ENCODE measurements at regions of chr16 and their contacts with region 1.

Region 1: DNA sequence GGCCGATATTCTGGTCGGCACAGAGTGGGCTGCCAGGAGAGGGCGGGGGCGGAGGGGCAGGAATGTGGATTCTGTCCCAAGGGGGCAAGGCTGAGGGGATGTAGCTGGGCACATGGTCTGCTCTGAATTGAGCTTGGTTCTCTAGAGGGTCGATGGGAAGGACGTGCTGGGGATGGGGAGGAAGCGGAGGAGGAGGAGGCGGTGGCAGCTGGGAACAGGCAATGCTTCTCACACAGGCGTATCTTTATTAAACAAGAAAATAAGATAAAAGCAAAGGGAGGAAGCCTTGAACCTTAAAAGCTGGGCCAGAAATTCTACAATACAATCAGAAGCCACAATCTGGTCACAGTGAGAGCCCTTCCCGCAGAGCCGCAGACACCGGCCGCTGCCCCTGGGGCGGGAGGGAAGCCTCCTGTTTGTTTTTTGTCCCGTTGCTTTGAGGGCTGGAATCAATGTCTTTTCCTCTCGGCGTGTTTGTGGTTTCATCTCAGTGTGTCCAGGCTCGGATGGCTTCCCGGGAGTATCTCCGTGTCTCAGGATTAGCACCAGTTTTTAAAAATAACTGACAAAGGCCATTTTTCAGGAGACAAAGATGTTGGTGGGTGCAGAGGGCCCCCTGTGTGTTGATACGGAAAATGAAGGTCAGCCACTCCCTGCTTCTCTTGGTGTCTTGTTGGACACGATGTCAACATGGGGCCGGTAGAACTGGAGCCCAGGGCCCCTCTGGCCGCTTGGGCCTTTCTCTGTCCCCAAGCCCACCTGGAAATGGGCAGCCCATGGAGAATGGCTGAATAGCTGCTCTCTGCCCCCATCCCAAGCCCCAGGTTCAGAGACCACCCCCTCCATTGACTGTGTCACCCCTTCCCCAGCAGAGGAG is 12.3 kb upstream of the SLC7A5 start:
- DNase-seq: no peak
- H3K4me3 ChIP-seq: no peak overlapping the region
- H3K27ac ChIP-seq: no peak overlapping the region
- H3K4me1 ChIP-seq: peaks cover 16% of the 10 kb centered on the region
- H3K27me3 ChIP-seq: no peaks in the 10 kb centered on the region
- CTCF ChIP-seq: no peak

Region 2: DNA sequence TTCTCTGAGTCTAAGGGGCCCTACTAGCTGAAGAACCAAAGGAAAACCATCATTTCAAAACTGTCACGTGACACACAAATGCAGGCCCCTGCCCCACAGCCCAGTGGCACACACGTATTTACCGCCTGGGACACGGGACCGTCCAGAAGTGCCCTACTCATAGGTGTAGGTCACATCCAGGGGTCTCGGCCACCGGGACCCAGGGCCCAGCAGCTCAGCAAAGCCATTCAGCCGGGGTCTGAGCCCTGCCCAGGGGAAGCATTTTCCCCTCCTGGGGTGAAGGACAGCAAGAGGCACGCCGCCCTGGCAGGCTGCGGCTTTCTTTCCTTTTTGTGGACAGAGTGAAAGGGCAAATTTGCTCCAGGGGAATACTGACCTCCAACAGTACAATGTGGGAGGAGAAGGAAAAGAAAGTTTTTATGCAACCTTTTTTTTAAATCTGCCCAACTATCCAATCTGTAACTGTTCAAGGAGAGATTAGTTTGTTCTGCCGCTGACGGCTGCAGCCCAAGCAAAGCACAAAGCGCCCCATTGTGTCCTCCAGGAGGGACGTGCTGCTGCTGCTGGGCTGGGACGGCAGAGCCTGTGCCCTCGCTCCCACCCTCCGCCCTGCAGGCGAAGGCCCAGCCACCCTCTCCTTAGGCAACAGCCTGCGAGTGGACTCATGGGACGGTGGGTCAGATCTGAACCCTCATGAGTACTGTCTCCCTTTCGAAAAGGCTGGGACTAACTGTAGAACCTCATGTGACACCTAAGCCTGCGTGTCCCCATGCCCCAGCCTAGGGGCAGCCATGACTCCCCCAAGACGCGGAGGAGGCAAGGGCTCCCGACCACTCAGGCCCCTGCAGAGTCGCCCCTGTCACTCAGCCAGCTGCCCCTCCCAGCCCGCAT is 33.5 kb before region 1 on chr16:
- CTCF ChIA-PET with region 1: interaction called, 20 read pairs
- POLR2A ChIA-PET with region 1: no interaction called
- intact Hi-C with region 1: no loop called
- DNase-seq: no peak
- H3K4me3 ChIP-seq: no peak overlapping the region
- H3K27ac ChIP-seq: no peak overlapping the region
- H3K4me1 ChIP-seq: peaks cover 14% of the 10 kb centered on the region
- H3K27me3 ChIP-seq: no peaks in the 10 kb centered on the region
- CTCF ChIP-seq: no peak

Measured in PC-9 (cell line).